ENCODE measurements at regions of chr3 and their contacts with region 1.

Region 1: GRCh38 chr3:156664831-156665178 is 9.6 kb upstream of the TIPARP start:
- DNase-seq: no peak
- ATAC-seq: no peak
- H3K4me3 ChIP-seq: no peak overlapping the region
- H3K27ac ChIP-seq: no peak overlapping the region
- H3K4me1 ChIP-seq: peaks cover 6% of the 10 kb centered on the region
- H3K27me3 ChIP-seq: no peaks in the 10 kb centered on the region
- CTCF ChIP-seq: no peak
- POLR2A ChIP-seq: no peak
- RAD21 ChIP-seq: no peak

Region 2: DNA sequence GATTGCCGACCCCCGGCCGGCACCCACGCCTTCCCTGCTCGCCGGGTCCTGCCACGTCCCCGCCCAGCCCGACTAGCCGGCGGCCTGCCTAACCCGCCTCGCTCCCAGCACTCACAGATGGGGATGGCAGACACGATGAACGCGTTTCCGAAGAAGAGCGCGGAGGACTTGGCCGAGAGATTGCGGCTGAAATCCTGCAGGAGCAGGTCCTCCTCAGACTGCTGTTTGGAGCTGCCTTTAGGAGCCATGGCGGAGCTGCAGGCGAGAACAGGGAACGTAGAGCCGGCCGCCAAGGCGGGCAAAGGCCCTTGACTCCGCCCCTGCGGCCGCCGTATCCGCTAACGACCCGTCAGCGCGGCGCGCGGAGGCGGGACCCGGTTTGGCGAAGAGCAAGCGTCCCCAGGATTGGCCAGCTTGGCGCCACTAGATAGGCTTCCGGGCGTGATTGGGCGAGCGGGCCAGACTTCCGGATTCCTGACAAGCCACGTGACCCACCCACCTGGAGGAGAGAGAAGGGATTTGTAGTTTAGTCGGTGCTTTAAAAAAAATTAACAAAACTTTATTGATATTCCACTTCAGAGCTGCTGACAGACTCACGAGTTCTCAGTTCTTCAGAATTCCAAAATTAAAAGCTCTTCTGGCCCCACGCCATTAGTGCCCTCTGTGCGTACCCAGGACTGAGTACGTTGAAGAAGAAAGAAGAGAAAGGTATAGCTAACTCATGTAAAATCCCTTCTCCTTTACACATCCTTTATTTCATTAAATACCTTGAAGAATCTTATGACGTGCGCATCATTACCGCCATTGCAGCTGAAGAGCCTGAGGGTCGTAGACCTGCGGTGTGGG is 109.7 kb before region 1 on chr3 and contains the start of gene SSR3:
- CTCF ChIA-PET with region 1: no interaction called
- POLR2A ChIA-PET with region 1: no interaction called
- dilution Hi-C with region 1: no loop called
- in situ Hi-C with region 1: loop called (anchors 10 kb)
- intact Hi-C with region 1: loop called (anchors 2 kb)
- DNase-seq: peak; percentile 100
- ATAC-seq: peak; percentile 97
- H3K4me3 ChIP-seq: peak within 1 kb of the TSS; percentile 76
- H3K27ac ChIP-seq: peak within 1 kb of the TSS; percentile 100
- H3K4me1 ChIP-seq: peaks cover 9% of the 10 kb centered on the region
- H3K27me3 ChIP-seq: no peaks in the 10 kb centered on the region
- CTCF ChIP-seq: no peak
- POLR2A ChIP-seq: peak; percentile 97
- RAD21 ChIP-seq: 0 out of 2 replicates have a peak, but pooled peaks have one; percentile 5
- total RNA-seq, gene SSR3: 606 and 608 TPM in 2 replicates

Region 3: DNA sequence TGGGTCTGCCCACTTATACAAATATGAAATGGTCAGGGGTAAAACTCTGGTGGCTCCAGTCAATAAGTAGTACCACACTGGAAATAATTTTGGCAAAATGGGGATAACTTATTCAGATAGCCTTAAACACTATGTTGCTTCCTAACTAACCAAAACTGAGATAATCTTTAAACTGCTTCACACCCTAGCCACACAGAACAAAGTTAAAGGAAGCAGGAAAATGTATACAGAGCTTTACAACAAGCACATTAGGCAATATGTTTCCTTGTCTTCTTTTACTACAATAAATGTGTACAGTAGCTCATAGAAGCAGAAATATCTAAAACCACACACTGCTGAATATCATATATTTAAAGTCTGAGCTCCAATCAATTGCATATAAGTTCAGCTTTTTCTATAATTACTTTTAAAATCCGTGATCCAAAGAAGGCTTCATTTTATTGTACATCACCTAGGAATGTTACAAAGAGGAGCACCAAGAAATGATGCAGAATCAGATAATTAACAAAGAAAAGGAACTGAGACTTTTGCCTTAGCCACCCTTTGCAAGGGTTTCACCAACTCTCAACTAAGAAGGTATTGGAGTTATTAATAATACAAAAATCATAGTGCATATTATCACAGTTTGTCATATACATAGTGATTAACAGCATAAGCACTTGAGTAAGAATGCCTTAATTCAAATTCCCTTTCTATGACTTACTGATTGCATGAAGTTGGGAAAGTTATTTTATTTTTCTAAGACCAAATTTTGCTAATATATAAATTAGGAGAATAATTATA is 100.7 kb before region 1 on chr3:
- CTCF ChIA-PET with region 1: no interaction called
- POLR2A ChIA-PET with region 1: no interaction called
- dilution Hi-C with region 1: no loop called
- in situ Hi-C with region 1: loop called (anchors 10 kb)
- intact Hi-C with region 1: no loop called
- DNase-seq: no peak
- ATAC-seq: no peak
- H3K4me3 ChIP-seq: no peak overlapping the region
- H3K27ac ChIP-seq: no peak overlapping the region
- H3K4me1 ChIP-seq: no peaks in the 10 kb centered on the region
- H3K27me3 ChIP-seq: peaks cover 4% of the 10 kb centered on the region; the same call in 1 of the 2 replicates
- CTCF ChIP-seq: no peak
- POLR2A ChIP-seq: no peak
- RAD21 ChIP-seq: no peak

Region 4: DNA sequence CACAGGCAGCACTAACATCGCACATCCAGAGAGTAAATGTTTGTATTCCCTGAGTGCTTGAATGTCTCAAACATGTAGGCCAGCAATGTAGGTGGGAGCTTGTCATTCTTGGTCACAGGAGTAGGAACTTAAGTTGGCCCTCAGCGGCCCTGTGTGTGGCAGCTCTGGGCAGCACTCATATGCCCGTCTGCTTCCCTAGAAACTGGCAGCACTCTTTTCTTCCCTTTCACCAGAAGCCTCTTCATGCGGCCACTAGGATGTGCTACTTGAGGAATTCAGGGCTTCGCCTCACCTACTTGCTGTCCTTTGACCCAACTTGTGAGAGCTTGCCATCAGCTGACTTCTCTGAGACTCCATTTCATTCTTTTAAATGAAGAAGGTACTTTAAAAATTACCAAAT is 79.1 kb after region 1 on chr3:
- CTCF ChIA-PET with region 1: no interaction called
- POLR2A ChIA-PET with region 1: no interaction called
- dilution Hi-C with region 1: no loop called
- in situ Hi-C with region 1: no loop called
- intact Hi-C with region 1: no loop called
- DNase-seq: no peak
- ATAC-seq: no peak
- H3K4me3 ChIP-seq: no peak overlapping the region
- H3K27ac ChIP-seq: no peak overlapping the region
- H3K4me1 ChIP-seq: 0 out of 2 replicates have a peak, but pooled peaks cover 2% of the 10 kb centered on the region
- H3K27me3 ChIP-seq: no peaks in the 10 kb centered on the region
- CTCF ChIP-seq: no peak
- POLR2A ChIP-seq: no peak
- RAD21 ChIP-seq: no peak

Measured in IMR-90 (cell line).